Posterior cingulate gyrus (tissue), 11 donors: ENCODE measurements at regions of chr3 and their contacts with region 1.

Region 1: GRCh38 chr3:117997201-117998049 is 1037.2 kb downstream of the IGSF11 start:
- DNase-seq: peak; percentile 75 to 98 (median 86)

Region 2: DNA sequence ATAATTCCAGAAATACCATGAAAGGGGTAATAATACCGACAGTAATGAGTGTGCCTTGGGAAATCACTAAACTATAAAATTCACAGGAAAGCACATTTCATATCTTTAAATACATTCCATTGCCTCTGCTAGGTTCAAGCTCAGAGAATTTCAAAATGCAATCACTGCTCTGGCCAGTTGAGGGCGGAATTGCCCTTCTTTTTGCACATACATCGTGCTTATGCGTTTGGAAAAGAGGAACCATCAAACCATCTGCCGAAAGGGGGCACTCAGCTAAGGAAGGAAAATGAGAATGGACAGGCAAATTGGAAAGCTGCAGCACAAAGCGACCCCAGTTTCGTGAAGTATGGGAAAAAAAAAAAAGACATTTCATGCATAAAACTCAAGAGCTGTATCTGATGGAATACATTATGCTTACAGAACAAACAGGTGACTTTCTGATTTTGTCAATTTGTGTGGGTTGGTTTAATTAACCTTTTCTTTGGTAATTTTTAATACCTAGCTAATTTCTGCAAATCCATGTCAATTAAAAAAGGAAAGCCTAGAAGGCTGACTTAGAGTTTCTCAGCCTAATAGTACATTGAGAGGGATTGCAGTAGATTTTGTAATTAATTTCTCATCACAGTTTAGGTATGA is 1226.5 kb before region 1 on chr3:
- intact Hi-C with region 1: loop called (anchors 5 kb)
- DNase-seq: peak; percentile 43 to 94 (median 80)

Region 3: DNA sequence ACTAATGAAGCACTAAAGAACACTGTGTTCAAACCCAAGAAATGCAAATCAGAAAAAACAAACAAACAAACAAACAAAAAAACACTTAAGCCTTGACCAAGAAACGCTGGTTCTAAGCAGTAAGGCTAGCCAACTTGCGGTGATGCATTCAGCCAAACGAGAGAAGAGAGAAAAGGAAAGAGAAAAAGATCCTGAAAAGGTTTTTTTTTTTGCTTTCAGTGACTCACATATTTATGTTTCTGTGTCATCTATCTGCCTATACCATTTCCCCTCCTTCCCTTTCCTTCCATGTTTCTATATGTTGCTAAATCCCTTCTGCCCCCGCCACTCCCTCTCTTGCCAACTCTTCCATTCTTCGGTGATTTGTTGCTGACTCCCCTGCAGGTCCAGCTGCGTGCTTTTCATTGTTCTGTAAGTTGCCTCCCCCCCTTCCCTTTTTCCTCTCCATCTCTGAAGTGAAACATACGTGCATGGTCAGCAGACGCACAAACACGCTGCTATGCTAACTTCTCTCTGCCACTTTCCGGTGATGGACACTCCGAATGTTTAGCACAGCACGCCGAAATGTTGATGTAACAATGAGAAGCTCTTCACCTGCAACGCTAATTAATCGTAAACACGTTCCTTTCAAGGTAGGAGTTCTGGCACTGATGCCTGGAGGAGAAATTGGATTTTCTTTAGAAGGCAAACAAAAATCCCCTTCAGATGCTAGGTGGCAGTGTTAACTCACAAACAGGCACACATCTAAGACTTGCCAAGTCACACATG is 1133.4 kb before region 1 on chr3:
- intact Hi-C with region 1: loop called (anchors 5 kb)
- DNase-seq: peak in 6 of 10 donors; percentile 7 to 71 (median 38)

Region 4: GRCh38 chr3:117019082-117019713 is 978.2 kb before region 1 on chr3:
- intact Hi-C with region 1: loop called (anchors 5 kb)
- DNase-seq: peak; percentile 42 to 95 (median 79)

Region 5: GRCh38 chr3:117547956-117548550 is 449.4 kb before region 1 on chr3:
- intact Hi-C with region 1: loop called (anchors 5 kb)
- DNase-seq: no peak

Region 6: DNA sequence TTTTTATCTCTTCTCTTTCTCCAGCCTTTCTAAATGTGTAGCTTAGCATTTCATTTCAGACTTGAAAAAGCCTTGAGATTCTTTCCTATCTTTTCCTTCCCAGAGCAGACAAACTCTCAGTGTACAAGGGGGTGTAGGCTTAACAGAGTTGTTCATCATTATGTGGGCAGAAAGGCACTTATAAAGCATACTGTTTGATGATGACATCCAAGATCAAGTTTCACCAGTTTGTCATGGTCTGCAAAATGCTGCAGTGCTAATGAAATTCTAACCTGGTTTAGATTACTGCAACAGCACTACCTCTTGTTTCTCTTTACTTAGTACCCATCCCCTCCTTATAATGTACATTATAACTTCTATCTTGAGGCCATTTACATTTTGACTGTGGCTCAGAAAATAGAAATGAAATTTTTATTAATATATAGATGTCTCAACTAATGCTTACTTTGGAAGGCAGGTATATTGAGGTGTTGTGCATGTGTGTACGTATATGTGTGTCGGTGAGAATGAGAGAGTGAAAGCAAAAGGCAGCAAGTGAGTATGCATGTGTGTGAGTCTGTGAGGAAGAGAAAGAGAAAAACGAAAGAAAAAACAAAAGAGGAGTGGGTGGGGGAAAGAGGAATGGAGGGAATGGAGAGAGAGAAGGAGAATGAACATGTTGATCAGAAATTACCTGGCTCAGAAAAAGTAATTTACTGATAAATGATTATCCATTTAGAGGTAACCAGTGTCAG is 244.3 kb before region 1 on chr3:
- intact Hi-C with region 1: loop called (anchors 5 kb)
- DNase-seq: no peak